HEK293 (cell line): ENCODE measurements at regions of chr10 and their contacts with region 1.

Region 1: GRCh38 chr10:101818119-101818871 is at the start of gene OGA:
- H3K4me3 ChIP-seq: peak within 1 kb of the TSS; percentile 92
- H3K27ac ChIP-seq: peak within 1 kb of the TSS; percentile 90
- H3K4me1 ChIP-seq: peaks cover 9% of the 10 kb centered on the region; the same call in 1 of the 2 replicates
- CTCF ChIP-seq: no peak

Region 2: GRCh38 chr10:101725296-101726115 is 92.8 kb before region 1 on chr10:
- CTCF ChIA-PET with region 1: no interaction called
- POLR2A ChIA-PET with region 1: no interaction called
- H3K4me3 ChIP-seq: no peak overlapping the region
- H3K27ac ChIP-seq: no peak overlapping the region
- H3K4me1 ChIP-seq: no peaks in the 10 kb centered on the region
- CTCF ChIP-seq: no peak

Region 3: DNA sequence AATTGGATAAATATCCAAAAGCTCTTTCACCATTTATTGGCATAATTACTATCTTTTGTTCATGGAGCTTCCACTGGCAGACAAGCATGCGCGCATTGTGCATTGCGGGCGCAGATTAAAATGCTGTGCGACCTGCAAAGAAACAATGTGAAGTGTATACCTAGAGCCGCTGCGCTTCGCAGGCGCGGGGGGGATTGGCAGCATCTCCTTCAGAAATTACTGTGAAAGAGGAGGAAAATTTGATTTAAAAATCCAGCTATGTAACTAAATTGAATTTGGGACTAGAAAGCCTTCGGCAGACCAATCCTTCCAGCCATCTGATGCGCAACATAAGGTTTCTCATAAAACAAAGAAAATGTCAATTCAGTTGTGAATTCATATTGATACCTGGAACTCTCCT is 24.8 kb before region 1 on chr10:
- CTCF ChIA-PET with region 1: interaction called, 6 read pairs
- POLR2A ChIA-PET with region 1: interaction called, 12 read pairs
- H3K4me3 ChIP-seq: no peak overlapping the region
- H3K27ac ChIP-seq: no peak overlapping the region
- H3K4me1 ChIP-seq: peaks cover 3% of the 10 kb centered on the region; the same call in 1 of the 2 replicates
- CTCF ChIP-seq: no peak

Region 4: GRCh38 chr10:101828766-101829551 is 10.7 kb after region 1 on chr10:
- CTCF ChIA-PET with region 1: interaction called, 4 read pairs
- POLR2A ChIA-PET with region 1: interaction called, 15 read pairs
- H3K4me3 ChIP-seq: no peak overlapping the region
- H3K27ac ChIP-seq: no peak overlapping the region
- H3K4me1 ChIP-seq: peaks cover 7% of the 10 kb centered on the region
- CTCF ChIP-seq: no peak

Region 5: GRCh38 chr10:101834341-101834740 is 16.0 kb after region 1 on chr10:
- CTCF ChIA-PET with region 1: interaction called, 17 read pairs
- POLR2A ChIA-PET with region 1: interaction called, 24 read pairs
- H3K4me3 ChIP-seq: no peak overlapping the region
- H3K27ac ChIP-seq: no peak overlapping the region
- H3K4me1 ChIP-seq: peaks cover 7% of the 10 kb centered on the region
- CTCF ChIP-seq: no peak